ENCODE measurements at regions of chr16 and their contacts with region 1.

Region 1: DNA sequence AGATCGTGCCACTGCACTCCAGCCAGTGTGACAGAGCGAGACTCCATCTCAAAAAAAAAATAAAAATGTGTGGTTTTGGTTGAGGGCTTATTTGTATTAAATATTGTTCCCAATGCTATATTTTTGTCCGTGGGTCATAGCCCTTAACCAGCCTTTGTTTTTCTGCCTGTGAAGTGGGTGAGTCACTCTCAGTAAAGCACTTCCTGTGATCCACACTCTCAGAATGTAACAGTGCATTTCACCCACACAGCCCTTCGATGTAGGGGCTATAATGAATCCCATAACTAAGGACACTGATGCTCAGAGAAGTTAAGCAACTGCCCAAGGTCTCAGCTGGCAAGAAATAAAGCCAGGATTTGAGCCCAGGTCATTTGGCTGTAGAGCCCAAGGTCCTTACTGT is 34.7 kb upstream of the POLR3E start:
- DNase-seq: no peak

Region 2: GRCh38 chr16:22217889-22218730 is 44.4 kb before region 1 on chr16:
- in situ Hi-C with region 1: loop called (anchors 10 kb)
- DNase-seq: peak; percentile 98